ENCODE measurements at regions of chr14 and their contacts with region 1.

Region 1: DNA sequence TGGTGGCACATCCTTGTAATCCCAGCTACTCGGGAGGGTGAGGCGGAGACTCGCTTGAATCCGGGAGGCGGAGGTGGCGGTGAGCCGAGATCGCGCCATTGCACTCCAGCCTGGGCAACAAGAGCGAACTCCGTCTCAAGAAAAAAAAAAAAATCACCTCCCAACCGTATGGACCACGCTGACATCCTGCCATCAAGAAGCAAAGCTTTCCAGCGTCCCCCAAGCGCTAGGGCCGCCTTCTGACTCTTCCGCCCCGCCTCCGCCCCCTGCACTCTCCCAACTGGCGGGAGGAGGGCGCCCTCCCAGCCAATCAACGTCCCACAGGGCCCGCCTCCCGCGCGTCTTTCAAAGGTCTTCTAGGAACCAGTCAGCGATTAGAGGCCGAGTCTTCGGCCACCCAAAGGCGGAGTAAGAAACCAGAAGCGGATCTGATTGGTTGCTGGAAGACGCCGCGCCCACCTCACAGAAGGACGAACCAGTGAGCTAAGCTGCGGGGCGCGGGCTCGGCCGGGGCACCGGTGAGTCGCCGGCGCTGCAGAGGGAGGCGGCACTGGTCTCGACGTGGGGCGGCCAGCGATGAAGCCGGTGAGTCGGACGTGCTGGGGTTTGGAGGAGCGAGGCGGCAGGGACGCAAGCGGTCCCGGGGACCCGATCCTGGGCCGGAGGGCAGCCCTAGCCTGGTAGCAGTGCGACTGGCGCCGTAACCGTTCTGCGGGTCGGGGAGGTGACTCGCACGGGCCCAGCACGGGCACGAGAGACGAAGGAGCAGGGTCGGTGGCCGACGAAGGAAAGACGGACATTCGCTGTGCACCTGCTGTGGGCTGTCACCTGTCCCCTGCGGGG is at the start of gene CDKN3:
- DNase-seq: peak; percentile 99
- H3K4me3 Mint-ChIP-seq: peak within 1 kb of the TSS; percentile 86
- H3K27ac Mint-ChIP-seq: peak within 1 kb of the TSS; percentile 65
- H3K4me1 Mint-ChIP-seq: peaks cover 8% of the 10 kb centered on the region
- H3K27me3 Mint-ChIP-seq: peaks cover 2% of the 10 kb centered on the region
- total RNA-seq, gene CDKN3: 96.5 to 101 TPM

Region 2: GRCh38 chr14:54356172-54356571 is 40.5 kb before region 1 on chr14:
- CTCF ChIA-PET with region 1: no interaction called
- intact Hi-C with region 1: no loop called
- DNase-seq: no peak
- H3K4me3 Mint-ChIP-seq: no peak overlapping the region
- H3K27ac Mint-ChIP-seq: no peak overlapping the region
- H3K4me1 Mint-ChIP-seq: peaks cover 3% of the 10 kb centered on the region
- H3K27me3 Mint-ChIP-seq: peaks cover 11% of the 10 kb centered on the region

Region 3: DNA sequence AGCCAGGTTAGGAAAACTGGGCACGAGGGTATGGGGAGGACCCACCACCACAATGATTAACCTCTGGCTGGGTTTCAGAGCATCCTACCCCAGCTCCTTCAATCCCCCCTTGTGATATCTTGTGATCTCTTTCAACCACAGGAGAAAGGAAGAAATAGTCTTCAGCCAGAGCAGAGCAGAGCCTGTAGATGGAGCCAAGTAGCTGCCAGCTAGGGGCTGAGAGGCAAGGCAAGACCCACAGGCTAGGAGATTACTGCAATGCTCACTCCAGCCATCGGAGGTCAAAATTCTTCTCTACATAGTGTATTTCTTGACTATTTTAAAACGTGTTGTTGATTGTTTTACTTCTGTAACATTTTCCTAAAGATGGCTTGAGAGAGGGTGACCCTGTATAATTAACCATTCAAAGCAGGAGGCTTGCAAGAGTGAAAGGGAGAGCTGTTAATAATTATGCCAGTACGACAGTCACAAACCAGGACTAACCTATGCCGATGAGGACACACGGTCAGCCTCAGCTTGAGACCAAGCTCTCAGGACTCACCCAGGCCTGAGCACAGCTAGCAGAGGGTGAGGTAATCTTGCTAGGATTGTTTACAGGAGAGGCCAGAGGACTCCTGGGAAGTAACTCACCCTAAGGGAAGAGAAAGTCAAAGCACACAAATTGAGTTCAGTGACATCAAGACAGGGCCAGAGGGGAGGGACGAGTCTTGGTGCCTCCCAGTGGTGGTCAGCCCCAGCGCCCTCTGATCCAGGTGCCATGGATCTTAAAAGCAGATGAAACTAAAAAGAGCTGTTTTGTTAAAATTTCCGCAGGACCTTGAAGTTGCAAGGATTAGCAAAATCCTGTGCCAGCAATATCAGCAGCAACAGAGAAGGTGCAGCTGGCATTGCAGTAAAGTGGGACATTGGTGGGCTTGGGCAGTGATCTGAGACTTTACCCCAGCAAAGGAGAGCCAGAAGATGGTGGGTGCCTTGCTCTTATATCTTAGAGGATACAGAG is 29.7 kb before region 1 on chr14:
- CTCF ChIA-PET with region 1: interaction called, 4 read pairs
- intact Hi-C with region 1: loop called (anchors 1 kb)
- DNase-seq: peak; percentile 53
- H3K4me3 Mint-ChIP-seq: no peak overlapping the region
- H3K27ac Mint-ChIP-seq: no peak overlapping the region
- H3K4me1 Mint-ChIP-seq: no peaks in the 10 kb centered on the region
- H3K27me3 Mint-ChIP-seq: peaks cover 3% of the 10 kb centered on the region

Region 4: DNA sequence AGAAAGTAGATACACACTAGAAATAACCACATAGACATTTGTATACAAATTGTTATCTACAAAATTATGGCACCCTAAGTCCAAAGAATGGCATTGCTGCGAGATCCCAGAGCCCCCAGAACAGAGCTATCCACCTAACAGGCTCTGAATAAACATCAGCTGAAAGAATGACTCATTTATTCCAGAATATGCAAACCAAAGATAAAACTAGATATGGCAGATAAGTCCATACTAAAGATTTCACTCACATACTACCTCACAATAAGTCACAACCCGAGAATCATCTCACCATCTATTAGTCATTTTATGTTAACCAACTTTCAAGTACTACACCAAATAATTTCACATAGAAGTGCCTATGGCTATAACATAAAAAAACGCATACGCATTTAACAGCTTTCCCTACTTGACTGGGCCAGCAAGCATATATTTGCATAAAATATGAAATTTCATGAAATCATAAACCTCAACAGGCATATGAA is 38.8 kb after region 1 on chr14:
- CTCF ChIA-PET with region 1: no interaction called
- intact Hi-C with region 1: loop called (anchors 1 kb)
- DNase-seq: peak; percentile 16
- H3K4me3 Mint-ChIP-seq: peak overlapping the region; percentile 3
- H3K27ac Mint-ChIP-seq: peak overlapping the region; percentile 80
- H3K4me1 Mint-ChIP-seq: peaks cover 81% of the 10 kb centered on the region
- H3K27me3 Mint-ChIP-seq: no peaks in the 10 kb centered on the region

Region 5: DNA sequence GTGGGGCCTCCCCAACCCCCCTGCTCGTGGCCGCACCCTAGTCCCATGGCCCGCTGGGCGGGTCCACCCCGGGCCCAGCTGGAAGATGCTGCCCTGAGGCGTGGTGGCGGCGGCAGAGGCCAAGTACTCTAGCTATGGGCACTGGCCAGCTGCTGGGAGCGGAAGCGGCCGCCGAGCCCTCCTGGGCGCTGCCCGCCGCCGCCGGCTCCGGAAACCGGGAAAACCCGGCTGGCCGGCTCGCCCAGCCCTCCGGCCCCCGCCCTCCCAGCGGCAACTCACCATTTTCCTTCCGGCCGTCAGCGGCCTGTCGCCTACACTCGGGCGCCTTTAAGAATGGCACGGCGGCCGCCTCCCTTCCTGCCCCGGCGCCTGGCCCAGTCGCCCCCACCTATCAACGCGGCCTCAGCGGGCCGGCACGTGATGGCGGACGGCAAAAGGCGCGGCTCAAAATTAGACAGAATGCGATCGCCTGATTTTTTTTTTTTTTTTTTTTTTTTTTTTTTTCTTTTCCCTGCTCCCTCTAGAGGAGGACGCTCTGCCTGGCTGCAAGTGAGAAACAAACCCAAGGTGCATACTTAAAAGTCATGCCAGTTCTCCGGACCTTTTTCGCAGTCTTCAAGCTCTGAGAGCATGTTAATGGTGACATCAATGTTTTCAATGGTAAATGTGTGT is 92.1 kb after region 1 on chr14 and contains the start of gene GMFB:
- CTCF ChIA-PET with region 1: interaction called, 4 read pairs
- intact Hi-C with region 1: loop called (anchors 1 kb)
- DNase-seq: peak; percentile 91
- H3K4me3 Mint-ChIP-seq: peak within 1 kb of the TSS; percentile 85
- H3K27ac Mint-ChIP-seq: peak within 1 kb of the TSS; percentile 88
- H3K4me1 Mint-ChIP-seq: peaks cover 54% of the 10 kb centered on the region
- H3K27me3 Mint-ChIP-seq: no peaks in the 10 kb centered on the region
- total RNA-seq, gene GMFB: 29.5 to 33.4 TPM

Region 6: DNA sequence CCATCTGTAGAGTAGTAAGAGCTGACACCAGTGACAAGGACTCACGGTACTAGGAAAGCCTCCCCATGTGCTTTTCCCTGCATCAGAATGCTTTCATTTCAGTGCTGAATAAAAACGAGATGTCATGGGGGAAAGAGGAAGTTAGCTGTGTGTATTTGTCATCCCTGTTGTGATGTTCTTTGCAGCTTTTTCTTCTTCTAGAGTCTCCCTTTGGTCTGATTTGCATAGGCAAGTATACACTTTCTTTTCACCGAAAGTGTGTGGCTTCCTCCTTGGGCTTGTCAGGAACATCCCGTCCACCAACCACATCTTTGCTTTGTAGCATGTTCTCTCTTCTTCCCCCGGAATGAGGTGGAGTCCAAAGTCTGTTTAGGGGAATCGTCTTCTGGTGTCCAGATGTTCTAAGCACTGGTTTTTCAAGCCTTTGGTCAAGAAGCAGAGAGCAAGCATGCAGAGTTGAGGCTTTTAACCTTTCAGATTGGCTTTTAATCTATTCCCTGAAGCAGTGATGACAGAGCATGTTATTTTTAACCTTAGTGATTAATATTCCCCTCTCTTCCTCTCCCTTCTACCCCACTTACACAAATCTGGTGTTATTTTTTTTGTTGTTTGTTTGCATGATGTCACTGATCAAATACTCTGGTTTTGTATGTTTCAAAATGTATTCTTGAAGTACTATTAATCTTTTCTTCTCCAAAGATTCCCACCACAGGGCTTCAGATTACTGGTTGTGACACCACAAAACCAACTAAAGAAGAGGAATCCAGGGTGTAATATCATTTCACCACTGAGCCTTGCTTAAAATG is 333.6 kb after region 1 on chr14:
- CTCF ChIA-PET with region 1: interaction called, 3 read pairs
- intact Hi-C with region 1: loop called (anchors 1 kb)
- DNase-seq: peak; percentile 74
- H3K4me3 Mint-ChIP-seq: peak overlapping the region; percentile 58
- H3K27ac Mint-ChIP-seq: peak overlapping the region; percentile 96
- H3K4me1 Mint-ChIP-seq: peaks cover 33% of the 10 kb centered on the region
- H3K27me3 Mint-ChIP-seq: peaks cover 3% of the 10 kb centered on the region

Region 7: GRCh38 chr14:55026793-55027561 is 630.3 kb after region 1 on chr14 and contains the starts of genes SOCS4 and WDHD1:
- CTCF ChIA-PET with region 1: no interaction called
- intact Hi-C with region 1: loop called (anchors 2 kb)
- DNase-seq: peak; percentile 97
- H3K4me3 Mint-ChIP-seq: peak within 1 kb of the TSS; percentile 96
- H3K27ac Mint-ChIP-seq: peak within 1 kb of the TSS; percentile 92
- H3K4me1 Mint-ChIP-seq: peaks cover 46% of the 10 kb centered on the region
- H3K27me3 Mint-ChIP-seq: no peaks in the 10 kb centered on the region
- total RNA-seq, gene SOCS4: 17.7 to 17.9 TPM
- total RNA-seq, gene WDHD1: 61.1 to 62.9 TPM

Measured in activated naive CD4-positive, alpha-beta T cell treated with anti-CD3 and anti-CD28 coated beads for 36 hours (primary cell).